WTC11 (cell line): ENCODE measurements at regions of chr17 and their contacts with region 1.

Region 1: GRCh38 chr17:34637548-34638525 is 58.5 kb downstream of the TMEM132E start:
- DNase-seq: peak; percentile 89
- ATAC-seq: peak; percentile 95
- H3K4me3 Mint-ChIP-seq: peak overlapping the region; percentile 25; the same call in 1 of the 2 replicates
- H3K27ac Mint-ChIP-seq: no peak overlapping the region
- H3K4me1 Mint-ChIP-seq: peaks cover 8% of the 10 kb centered on the region
- H3K27me3 Mint-ChIP-seq: peaks cover 43% of the 10 kb centered on the region
- CTCF ChIP-seq: peak; percentile 69

Region 2: DNA sequence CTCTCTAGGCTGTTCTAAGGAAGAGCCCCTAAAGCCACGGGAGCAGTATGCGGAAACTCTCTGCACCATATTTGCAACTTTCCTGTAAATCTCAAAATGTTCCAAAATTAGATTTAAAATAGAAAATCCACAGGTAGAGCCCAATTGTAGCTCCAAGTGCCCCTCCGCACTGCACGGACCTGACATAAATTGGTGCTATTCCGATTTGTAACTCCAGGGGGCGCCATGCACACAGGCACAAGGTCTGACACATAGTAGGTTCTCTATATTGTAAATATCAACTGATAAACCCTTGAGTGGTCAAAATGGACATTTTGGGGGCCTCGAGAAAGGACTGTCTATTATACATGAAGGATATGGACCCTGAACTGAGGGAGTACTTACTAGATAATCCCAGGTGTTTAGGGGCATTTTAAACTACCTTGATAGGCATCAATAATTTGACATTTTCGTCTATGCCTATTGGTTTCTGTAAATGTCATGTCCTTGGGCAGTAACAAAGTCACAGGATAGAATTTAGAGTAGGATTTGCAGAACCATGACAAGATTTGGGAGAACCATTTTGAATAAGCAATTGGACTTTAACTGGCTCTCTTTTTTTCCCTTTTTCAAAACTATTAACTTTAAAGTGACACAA is 95.0 kb before region 1 on chr17:
- CTCF ChIA-PET with region 1: interaction called, 81 read pairs
- POLR2A ChIA-PET with region 1: no interaction called
- DNase-seq: peak; percentile 73
- ATAC-seq: peak; percentile 68
- H3K4me3 Mint-ChIP-seq: no peak overlapping the region
- H3K27ac Mint-ChIP-seq: no peak overlapping the region
- H3K4me1 Mint-ChIP-seq: peaks cover 5% of the 10 kb centered on the region
- H3K27me3 Mint-ChIP-seq: peaks cover 14% of the 10 kb centered on the region; the same call in 1 of the 2 replicates
- CTCF ChIP-seq: peak; percentile 98

Region 3: DNA sequence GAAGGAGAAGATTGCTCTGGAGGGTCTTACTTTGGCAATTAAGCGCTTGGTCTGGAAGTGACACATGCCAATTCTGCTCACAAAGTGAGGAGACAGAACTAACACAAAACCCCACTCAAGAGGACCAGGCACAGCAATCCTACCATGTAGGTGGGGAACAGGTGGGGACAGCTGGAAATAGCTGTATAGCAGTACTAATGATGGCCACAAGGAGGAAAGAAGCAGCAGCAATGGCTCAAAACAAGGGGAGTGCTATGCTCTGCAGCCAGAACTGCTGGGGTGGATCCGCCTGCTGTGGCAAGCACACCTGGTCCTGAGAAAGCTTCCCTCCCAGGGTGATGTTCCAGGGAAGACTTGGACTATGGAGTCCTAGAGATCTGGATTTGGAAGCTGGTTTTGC is 75.5 kb before region 1 on chr17:
- CTCF ChIA-PET with region 1: interaction called, 15 read pairs
- POLR2A ChIA-PET with region 1: no interaction called
- DNase-seq: peak; percentile 48
- ATAC-seq: peak; percentile 94
- H3K4me3 Mint-ChIP-seq: no peak overlapping the region
- H3K27ac Mint-ChIP-seq: no peak overlapping the region
- H3K4me1 Mint-ChIP-seq: no peaks in the 10 kb centered on the region
- H3K27me3 Mint-ChIP-seq: peaks cover 19% of the 10 kb centered on the region
- CTCF ChIP-seq: peak; percentile 53

Region 4: DNA sequence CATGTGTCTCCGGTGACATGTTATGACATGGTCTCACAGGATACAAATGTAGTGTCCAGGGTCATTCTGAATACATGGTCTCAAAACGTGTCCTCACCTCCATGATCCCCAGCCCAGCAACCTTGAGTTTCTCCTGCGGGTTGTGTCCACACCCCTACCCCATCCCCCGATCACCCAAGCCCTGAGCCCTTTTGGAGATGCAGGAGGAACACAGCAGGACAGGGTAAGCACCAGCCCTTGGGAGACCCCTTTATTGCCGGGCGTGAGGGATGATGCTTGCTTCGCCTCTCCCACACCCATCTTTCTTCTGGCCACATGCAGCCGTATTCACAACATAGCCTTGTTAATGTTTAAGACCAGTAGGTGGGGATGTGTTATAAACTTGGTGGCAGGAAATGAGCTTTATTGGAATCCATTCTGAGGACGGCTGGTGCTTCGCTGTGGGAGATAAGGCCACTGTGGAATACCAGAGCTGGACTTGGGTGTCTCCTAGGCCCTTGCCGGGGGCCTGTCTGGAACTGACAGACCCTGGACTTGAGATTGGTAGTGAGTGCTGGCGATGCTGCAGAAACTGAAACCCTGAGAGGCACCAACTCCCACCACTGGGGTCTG is 52.9 kb before region 1 on chr17:
- CTCF ChIA-PET with region 1: interaction called, 26 read pairs
- POLR2A ChIA-PET with region 1: no interaction called
- DNase-seq: no peak
- ATAC-seq: no peak
- H3K4me3 Mint-ChIP-seq: no peak overlapping the region
- H3K27ac Mint-ChIP-seq: no peak overlapping the region
- H3K4me1 Mint-ChIP-seq: peaks cover 11% of the 10 kb centered on the region
- H3K27me3 Mint-ChIP-seq: peaks cover 97% of the 10 kb centered on the region
- CTCF ChIP-seq: no peak

Region 5: GRCh38 chr17:34626141-34626681 is 11.6 kb before region 1 on chr17:
- CTCF ChIA-PET with region 1: interaction called, 22 read pairs
- POLR2A ChIA-PET with region 1: no interaction called
- DNase-seq: peak; percentile 44
- ATAC-seq: peak; percentile 47
- H3K4me3 Mint-ChIP-seq: no peak overlapping the region
- H3K27ac Mint-ChIP-seq: no peak overlapping the region
- H3K4me1 Mint-ChIP-seq: peaks cover 24% of the 10 kb centered on the region
- H3K27me3 Mint-ChIP-seq: peaks cover 33% of the 10 kb centered on the region
- CTCF ChIP-seq: no peak

Region 6: DNA sequence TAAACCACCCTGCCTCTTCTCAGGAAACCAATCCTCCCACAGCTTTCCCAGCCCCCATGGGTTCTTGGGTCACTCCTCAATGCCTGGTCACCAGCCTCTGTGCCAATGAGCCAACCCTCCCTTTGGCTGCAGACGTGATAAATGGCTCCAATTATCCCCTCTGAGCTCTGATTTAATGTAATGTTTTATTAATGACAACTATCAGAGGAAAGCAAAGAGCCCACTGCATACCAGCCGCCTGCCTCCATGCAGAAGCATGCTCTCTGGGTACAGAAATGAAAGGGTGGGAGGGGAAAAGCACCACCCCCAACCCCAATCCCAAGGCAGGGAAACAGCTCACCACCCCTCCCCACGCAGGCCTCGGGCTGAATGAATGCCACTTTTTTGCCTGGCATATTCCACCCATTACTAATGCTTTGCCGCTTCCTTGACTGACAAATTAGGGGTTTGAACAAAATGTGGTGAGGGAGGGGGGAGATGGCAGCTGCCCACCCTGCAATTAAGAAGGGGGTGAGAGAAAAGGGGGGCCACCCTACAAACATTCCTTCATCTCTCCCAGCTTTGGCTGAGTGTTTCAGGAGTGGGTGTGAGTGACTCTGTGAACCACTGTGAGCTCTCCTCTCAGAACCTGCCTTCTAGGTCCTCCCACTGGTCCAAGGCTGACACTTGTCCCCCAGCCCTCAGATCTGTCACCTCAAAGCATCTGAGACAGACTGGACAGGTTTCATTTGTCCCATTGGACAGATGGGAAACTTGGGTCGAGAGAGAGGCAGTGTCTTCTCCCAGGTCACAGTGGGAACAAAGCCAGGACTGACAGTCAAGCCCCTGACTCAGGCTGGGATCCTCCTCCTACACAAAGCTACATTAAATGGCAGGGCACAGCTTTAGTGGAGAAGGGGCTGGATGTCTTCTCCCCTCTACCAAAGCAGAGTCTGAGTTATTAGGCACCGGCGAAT is 103.0 kb after region 1 on chr17:
- CTCF ChIA-PET with region 1: no interaction called
- POLR2A ChIA-PET with region 1: no interaction called
- DNase-seq: no peak
- ATAC-seq: no peak
- H3K4me3 Mint-ChIP-seq: no peak overlapping the region
- H3K27ac Mint-ChIP-seq: no peak overlapping the region
- H3K4me1 Mint-ChIP-seq: peaks cover 9% of the 10 kb centered on the region
- H3K27me3 Mint-ChIP-seq: peaks cover 3% of the 10 kb centered on the region; the same call in 1 of the 2 replicates
- CTCF ChIP-seq: no peak